Lower leg skin (tissue), 4 donors: ENCODE measurements at regions of chr3 and their contacts with region 1.

Region 1: GRCh38 chr3:129934234-129935123 is 40.0 kb upstream of the TRH start:
- DNase-seq: peak in 1 of 2 donors; percentile 22
- H3K4me3 ChIP-seq: no peak overlapping the region
- CTCF ChIP-seq: peak in 1 of 3 donors; percentile 48
- POLR2A ChIP-seq: no peak

Region 2: DNA sequence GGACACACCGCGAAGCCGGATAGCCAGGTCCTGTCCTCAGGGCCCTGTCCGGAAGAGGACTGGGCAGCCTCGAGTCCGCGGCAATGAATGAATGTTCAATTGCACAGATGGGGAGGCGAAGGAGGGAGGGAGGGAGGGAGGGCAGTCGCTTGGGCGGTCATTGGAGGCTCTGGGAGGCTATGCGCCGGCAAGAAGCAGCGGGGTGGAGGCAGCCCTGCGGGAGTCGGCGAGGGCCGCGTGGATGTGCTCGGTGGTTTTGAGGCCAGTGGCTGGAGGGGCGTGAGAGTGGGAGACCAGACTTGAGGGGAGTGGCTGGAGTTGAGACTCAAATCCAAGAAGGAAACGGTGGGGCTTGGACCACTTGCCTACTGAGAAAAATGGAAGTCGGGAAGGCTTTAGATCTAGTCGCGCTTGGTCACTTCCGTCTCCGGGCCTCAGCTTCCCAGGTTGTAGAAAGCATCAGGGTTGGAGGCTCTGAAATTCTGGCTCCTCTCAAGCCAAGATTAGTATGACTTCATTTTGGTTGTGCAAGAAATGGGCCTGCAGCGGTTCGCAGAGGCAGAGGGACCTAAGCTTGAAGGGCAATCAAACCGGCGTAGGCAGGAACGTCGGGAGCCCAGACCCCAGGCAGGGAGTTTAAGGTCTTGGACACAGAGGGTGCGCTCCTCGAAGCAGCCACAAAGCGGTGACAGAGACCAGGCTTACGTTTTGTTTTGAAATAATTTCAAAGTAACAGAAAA is 306.9 kb before region 1 on chr3:
- intact Hi-C with region 1: loop called (anchors 10 kb)
- DNase-seq: peak in 1 of 2 donors; percentile 93
- H3K4me3 ChIP-seq: peak overlapping the region; percentile 21
- CTCF ChIP-seq: peak in 1 of 3 donors; percentile 79
- POLR2A ChIP-seq: no peak

Region 3: GRCh38 chr3:129645290-129645689 is 289.2 kb before region 1 on chr3:
- intact Hi-C with region 1: loop called (anchors 5 kb)
- DNase-seq: peak in 1 of 2 donors; percentile 39
- H3K4me3 ChIP-seq: no peak overlapping the region
- CTCF ChIP-seq: no peak
- POLR2A ChIP-seq: no peak

Region 4: DNA sequence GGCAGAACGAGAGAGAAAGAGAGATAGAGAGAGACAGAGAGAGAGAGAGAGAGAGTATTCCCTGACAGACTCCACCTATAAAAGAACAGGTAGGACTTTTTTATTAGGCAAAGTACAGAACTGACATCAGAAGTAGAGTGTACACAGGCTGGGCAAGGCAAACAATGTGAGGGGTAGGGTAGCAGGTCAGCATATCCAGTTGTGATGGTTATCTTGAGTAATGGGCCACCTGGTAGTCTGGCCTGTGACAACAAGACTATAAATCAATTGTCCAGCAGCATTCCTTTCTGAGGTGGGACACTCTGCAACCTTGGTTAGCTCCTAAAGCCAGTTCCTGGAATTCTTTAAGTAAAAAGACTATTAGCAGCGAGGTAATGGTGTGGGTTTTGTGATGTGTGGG is 26.1 kb before region 1 on chr3:
- intact Hi-C with region 1: no loop called
- DNase-seq: no peak
- H3K4me3 ChIP-seq: no peak overlapping the region
- CTCF ChIP-seq: no peak
- POLR2A ChIP-seq: no peak